Activated CD8-positive, alpha-beta T cell treated with anti-CD3 and anti-CD28 coated beads, Interleukin-2, amount 10 ng/mL, durations not matched to agents 7 days and 5 days (primary cell): ENCODE measurements at regions of chr10 and their contacts with region 1.

Region 1: DNA sequence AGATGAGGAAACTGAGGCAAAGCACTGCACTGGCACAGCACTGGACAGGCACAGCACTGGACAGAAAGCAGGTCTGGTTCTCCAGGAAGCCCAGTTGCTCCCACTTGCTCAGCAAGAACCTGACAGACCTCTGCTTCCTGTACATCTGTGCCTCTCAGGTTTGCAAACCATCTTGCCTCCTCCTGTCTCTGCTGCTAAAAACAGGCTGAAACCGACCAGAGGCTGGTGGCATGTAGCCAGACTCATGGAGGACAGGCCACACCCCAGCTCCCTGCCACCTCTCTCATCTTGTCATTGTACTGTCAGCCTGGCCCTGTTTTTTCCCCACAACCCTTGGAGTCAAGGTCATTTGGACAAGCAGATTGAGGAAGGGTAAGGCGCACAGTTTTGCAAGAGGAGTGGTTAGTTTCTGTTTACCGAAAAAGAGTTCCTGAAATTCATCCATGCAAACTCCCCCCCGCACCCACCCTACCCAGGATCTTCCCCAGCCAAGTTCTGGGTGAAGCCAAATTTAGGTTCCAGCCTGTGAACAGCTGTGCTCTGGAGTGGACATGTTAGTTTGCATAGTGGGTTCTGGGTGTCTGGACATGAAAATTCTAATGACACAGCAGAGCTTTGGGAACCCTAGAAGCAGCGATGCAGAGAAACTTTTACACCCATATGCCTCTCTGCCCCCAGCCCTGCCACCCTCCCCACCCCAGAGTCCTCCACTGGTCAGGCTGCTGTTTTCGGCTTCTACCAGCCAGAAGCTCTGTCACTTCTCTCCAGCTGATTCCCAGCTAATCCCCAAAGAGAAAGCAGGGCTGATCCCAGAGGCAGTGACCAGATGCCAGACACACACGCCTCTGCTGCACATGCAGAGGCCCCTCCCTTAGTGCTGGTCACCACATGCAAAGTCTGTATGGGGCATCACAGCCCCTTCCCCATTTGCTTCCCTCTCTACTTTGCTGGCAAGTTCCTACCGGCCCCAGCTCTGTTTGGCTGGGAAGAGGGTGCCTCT is 8.5 kb upstream of the C10orf105 start:
- DNase-seq: peak; percentile 83
- ATAC-seq: peak; percentile 50
- H3K4me3 Mint-ChIP-seq: peak overlapping the region; percentile 71
- H3K27ac Mint-ChIP-seq: peak overlapping the region; percentile 98
- H3K4me1 Mint-ChIP-seq: peaks cover 98% of the 10 kb centered on the region
- H3K27me3 Mint-ChIP-seq: no peaks in the 10 kb centered on the region

Region 2: GRCh38 chr10:71708301-71708703 is 19.7 kb before region 1 on chr10:
- CTCF ChIA-PET with region 1: interaction called, 24 read pairs
- POLR2A ChIA-PET with region 1: interaction called, 15 read pairs
- DNase-seq: peak; percentile 68
- ATAC-seq: peak; percentile 42
- H3K4me3 Mint-ChIP-seq: no peak overlapping the region
- H3K27ac Mint-ChIP-seq: peak overlapping the region; percentile 55
- H3K4me1 Mint-ChIP-seq: peaks cover 55% of the 10 kb centered on the region
- H3K27me3 Mint-ChIP-seq: no peaks in the 10 kb centered on the region

Region 3: DNA sequence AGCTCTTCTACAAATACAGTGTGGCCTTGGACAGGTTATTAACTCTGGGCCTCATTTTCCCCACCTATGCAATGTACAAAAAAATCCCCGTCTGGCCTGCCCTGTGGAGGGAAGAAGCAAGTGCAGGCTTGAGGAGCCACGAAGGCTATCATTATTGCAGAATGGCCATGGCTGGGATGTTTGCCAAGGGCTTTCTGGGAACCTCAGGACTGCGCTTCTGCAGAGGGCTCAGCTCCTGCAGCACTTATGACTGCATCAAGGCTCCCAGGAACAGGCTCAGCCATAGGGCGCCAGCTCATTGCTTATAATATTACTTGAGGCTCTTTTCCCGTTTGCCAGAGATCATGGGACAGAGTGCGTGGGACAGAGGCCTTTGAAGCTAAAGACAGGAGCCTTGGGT is 12.0 kb after region 1 on chr10:
- CTCF ChIA-PET with region 1: interaction called, 116 read pairs
- POLR2A ChIA-PET with region 1: interaction called, 34 read pairs
- DNase-seq: no peak
- ATAC-seq: no peak
- H3K4me3 Mint-ChIP-seq: no peak overlapping the region
- H3K27ac Mint-ChIP-seq: peak overlapping the region; percentile 93
- H3K4me1 Mint-ChIP-seq: peaks cover 100% of the 10 kb centered on the region
- H3K27me3 Mint-ChIP-seq: no peaks in the 10 kb centered on the region

Region 4: GRCh38 chr10:71756311-71757191 is 28.5 kb after region 1 on chr10:
- CTCF ChIA-PET with region 1: interaction called, 116 read pairs
- POLR2A ChIA-PET with region 1: interaction called, 6 read pairs
- DNase-seq: no peak
- ATAC-seq: peak; percentile 53
- H3K4me3 Mint-ChIP-seq: peak overlapping the region; percentile 57
- H3K27ac Mint-ChIP-seq: peak overlapping the region; percentile 91
- H3K4me1 Mint-ChIP-seq: peaks cover 86% of the 10 kb centered on the region
- H3K27me3 Mint-ChIP-seq: no peaks in the 10 kb centered on the region

Region 5: GRCh38 chr10:71771821-71772617 is 44.0 kb after region 1 on chr10:
- CTCF ChIA-PET with region 1: interaction called, 186 read pairs
- POLR2A ChIA-PET with region 1: interaction called, 87 read pairs
- DNase-seq: peak; percentile 58
- ATAC-seq: peak; percentile 7
- H3K4me3 Mint-ChIP-seq: peak overlapping the region; percentile 80
- H3K27ac Mint-ChIP-seq: peak overlapping the region; percentile 89
- H3K4me1 Mint-ChIP-seq: peaks cover 81% of the 10 kb centered on the region
- H3K27me3 Mint-ChIP-seq: no peaks in the 10 kb centered on the region